GM12878 (cell line): ENCODE measurements at regions of chr3 and their contacts with region 1.

Region 1: DNA sequence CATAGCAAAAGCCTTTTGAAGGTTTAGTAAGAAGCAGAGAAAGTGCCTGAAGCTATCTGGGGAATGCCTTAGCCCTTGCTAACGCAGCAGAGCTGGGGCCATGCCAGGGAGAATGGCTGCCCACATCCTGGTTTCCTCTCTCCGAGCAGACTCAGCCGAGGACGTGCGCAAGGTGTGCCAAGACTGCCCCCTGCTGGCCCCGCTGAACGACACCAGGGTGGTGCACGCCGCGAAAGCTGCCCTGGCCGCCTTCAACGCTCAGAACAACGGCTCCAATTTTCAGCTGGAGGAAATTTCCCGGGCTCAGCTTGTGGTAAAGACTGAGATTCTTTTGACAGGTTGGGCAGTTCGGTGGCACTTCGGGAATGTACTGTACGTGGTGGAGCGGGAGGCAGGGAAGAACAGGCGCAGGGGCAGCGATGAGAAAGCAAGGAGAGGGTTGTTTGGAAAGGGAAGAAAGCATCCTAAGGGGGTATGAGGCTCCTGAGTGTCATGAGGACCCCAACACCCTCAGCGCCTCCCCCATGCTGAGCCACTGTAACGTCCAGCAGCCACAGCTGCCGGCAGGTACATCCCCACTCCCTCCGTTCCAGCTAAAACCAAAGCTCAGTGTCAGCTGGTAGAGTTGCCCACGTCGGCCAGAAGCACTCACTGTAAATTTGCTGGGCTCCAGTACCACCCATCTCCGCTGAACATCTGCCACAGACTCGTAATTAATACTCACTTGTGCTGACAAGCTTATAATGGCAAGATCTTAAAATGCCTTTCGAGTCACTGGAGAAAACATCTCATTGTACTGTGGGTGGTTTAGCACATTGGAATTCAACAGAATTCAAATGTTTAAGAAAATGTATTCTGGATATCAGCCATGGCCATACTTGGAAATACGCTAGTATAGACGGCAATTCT is 4.4 kb downstream of the AHSG start:
- DNase-seq: peak; percentile 59
- ATAC-seq: peak; percentile 98
- H3K4me3 ChIP-seq: no peak overlapping the region; the same call in 1 of the 2 replicates
- H3K27ac ChIP-seq: no peak overlapping the region
- H3K4me1 ChIP-seq: peaks cover 7% of the 10 kb centered on the region
- H3K27me3 ChIP-seq: peaks cover 2 to 3% of the 10 kb centered on the region in 2 experiments; a peak in 3 of 4 replicates
- CTCF ChIP-seq: peak; percentile 94 to 97 (median 96)
- EP300 ChIP-seq: no peak
- POLR2A ChIP-seq: no peak
- RAD21 ChIP-seq: peak; percentile 77

Region 2: DNA sequence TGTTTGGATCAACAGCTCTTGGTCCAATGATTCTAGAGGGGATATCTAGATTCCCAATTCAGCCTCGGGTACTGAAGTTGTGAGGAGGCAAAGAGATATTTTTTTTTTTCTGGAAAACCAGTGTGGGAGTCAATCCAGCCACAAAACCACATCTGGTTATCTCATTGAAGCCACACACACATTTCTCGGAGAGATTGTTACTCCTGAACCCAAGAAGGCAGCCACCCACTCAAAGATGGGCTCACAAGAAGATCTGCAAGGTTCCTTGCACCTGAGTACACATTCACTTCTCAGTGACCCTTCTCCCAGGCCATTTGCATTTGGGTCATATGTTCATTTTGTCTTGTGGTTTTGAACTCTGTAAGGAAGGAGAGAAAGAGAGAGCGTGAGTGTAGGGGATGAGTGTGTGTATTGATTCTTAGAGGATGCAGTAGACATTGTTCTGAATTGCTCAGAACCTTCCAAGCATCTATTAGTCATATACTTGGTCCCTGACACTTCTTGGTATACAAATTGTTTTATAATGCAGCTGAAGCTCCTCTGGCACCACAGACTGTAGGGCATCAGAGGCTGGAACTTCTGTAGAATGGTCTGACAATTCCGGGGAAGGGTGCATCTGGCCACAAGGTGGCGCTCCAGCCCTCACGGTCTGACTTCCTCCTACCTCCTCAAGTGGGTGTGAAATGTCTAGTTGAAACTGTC is 640.2 kb before region 1 on chr3:
- CTCF ChIA-PET with region 1: interaction called, 80 read pairs
- POLR2A ChIA-PET with region 1: no interaction called
- RAD21 ChIA-PET with region 1: interaction called, 11 read pairs
- SMC1A ChIA-PET with region 1: interaction called, 9 read pairs
- in situ Hi-C with region 1: no loop called
- intact Hi-C with region 1: loop called (anchors 2 kb)
- DNase-seq: peak; percentile 42
- ATAC-seq: peak; percentile 100
- H3K4me3 ChIP-seq: no peak overlapping the region
- H3K27ac ChIP-seq: no peak overlapping the region
- H3K4me1 ChIP-seq: peaks cover 4% of the 10 kb centered on the region; the same call in 1 of the 2 replicates
- H3K27me3 ChIP-seq: no peaks in the 10 kb centered on the region
- CTCF ChIP-seq: peak; percentile 85 to 93 (median 90)
- EP300 ChIP-seq: no peak
- POLR2A ChIP-seq: no peak
- RAD21 ChIP-seq: peak; percentile 76

Region 3: DNA sequence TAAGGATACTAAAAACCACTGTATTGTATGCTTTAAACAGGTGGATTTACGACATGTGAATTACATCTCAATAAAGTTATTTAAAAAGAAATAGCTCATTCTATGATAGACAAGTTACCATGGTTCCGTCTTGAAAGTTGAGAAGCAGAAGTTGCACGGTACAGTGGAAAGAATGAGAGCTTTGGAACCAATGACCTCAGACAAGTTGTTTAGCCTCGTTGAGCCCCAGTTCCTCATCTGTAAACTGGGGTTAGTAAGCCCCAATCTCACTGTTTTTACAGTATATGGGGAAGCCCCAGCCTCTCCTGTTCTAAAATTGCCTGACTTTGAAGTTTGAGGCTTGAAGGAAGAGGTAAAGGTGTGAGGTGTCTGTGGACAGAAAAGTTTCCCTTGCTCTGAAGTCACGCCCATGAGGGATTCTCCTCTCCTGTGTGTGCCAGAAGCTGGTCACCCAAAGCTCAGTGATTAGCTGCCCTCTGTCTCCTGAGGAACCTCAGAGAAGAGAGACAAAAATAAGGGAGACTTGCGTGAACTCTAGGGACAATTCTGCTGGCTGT is 83.1 kb before region 1 on chr3:
- CTCF ChIA-PET with region 1: interaction called, 73 read pairs
- POLR2A ChIA-PET with region 1: no interaction called
- RAD21 ChIA-PET with region 1: interaction called, 41 read pairs
- SMC1A ChIA-PET with region 1: interaction called, 38 read pairs
- in situ Hi-C with region 1: no loop called
- intact Hi-C with region 1: no loop called
- DNase-seq: peak; percentile 95
- ATAC-seq: peak; percentile 87
- H3K4me3 ChIP-seq: peak overlapping the region; percentile 13; the same call in 1 of the 2 replicates
- H3K27ac ChIP-seq: peak overlapping the region; percentile 86
- H3K4me1 ChIP-seq: peaks cover 78% of the 10 kb centered on the region
- H3K27me3 ChIP-seq: no peaks in the 10 kb centered on the region
- CTCF ChIP-seq: no peak
- EP300 ChIP-seq: peak; percentile 88 to 89
- POLR2A ChIP-seq: no peak
- RAD21 ChIP-seq: 0 out of 2 replicates have a peak, but pooled peaks have one; percentile 12

Region 4: DNA sequence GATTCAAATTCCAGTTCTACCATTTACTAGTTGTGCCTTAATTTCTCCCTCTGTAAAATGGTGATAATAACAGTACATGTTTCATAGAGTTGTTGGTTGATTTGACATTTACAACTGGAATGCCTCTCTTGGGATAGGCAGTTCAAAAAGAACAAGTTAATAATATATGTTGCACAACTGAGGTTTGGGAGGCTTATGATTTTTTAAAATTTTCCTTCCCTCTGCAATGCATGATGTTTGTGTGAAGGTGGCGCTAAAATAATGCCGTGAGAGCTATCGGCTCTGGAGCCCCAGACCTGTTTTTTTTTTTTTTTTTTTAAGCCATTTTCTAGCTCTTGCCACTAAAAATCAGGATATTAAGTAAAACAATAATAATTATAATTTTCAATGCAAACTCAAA is 28.2 kb before region 1 on chr3:
- CTCF ChIA-PET with region 1: interaction called, 12 read pairs
- POLR2A ChIA-PET with region 1: no interaction called
- RAD21 ChIA-PET with region 1: no interaction called
- SMC1A ChIA-PET with region 1: interaction called, 6 read pairs
- in situ Hi-C with region 1: no loop called
- intact Hi-C with region 1: no loop called
- DNase-seq: no peak
- ATAC-seq: no peak
- H3K4me3 ChIP-seq: no peak overlapping the region
- H3K27ac ChIP-seq: no peak overlapping the region
- H3K4me1 ChIP-seq: no peaks in the 10 kb centered on the region
- H3K27me3 ChIP-seq: peaks cover 0 to 2% of the 10 kb centered on the region in 2 experiments; a peak in 1 of 4 replicates
- CTCF ChIP-seq: peak in 2 of 3 experiments; percentile 10 to 16; a peak in 2 of 6 replicates
- EP300 ChIP-seq: no peak
- POLR2A ChIP-seq: no peak
- RAD21 ChIP-seq: peak; percentile 29

Region 5: GRCh38 chr3:186653080-186653707 is 35.9 kb after region 1 on chr3:
- CTCF ChIA-PET with region 1: interaction called, 21 read pairs
- POLR2A ChIA-PET with region 1: no interaction called
- RAD21 ChIA-PET with region 1: no interaction called
- SMC1A ChIA-PET with region 1: interaction called, 3 read pairs
- in situ Hi-C with region 1: no loop called
- intact Hi-C with region 1: no loop called
- DNase-seq: peak; percentile 61
- ATAC-seq: peak; percentile 98
- H3K4me3 ChIP-seq: no peak overlapping the region; the same call in 1 of the 2 replicates
- H3K27ac ChIP-seq: peak overlapping the region; percentile 32
- H3K4me1 ChIP-seq: peaks cover 17% of the 10 kb centered on the region
- H3K27me3 ChIP-seq: no peaks in the 10 kb centered on the region
- CTCF ChIP-seq: no peak
- EP300 ChIP-seq: no peak
- POLR2A ChIP-seq: no peak
- RAD21 ChIP-seq: no peak

Region 6: GRCh38 chr3:186669378-186670084 is 52.2 kb after region 1 on chr3:
- CTCF ChIA-PET with region 1: no interaction called
- POLR2A ChIA-PET with region 1: no interaction called
- RAD21 ChIA-PET with region 1: no interaction called
- SMC1A ChIA-PET with region 1: no interaction called
- in situ Hi-C with region 1: no loop called
- intact Hi-C with region 1: no loop called
- DNase-seq: no peak
- ATAC-seq: no peak
- H3K4me3 ChIP-seq: no peak overlapping the region
- H3K27ac ChIP-seq: no peak overlapping the region
- H3K4me1 ChIP-seq: no peaks in the 10 kb centered on the region
- H3K27me3 ChIP-seq: no peaks in the 10 kb centered on the region; a peak in 1 of 4 replicates
- CTCF ChIP-seq: no peak
- EP300 ChIP-seq: no peak
- POLR2A ChIP-seq: no peak
- RAD21 ChIP-seq: no peak

Region 7: GRCh38 chr3:186717039-186717457 is 99.8 kb after region 1 on chr3 and contains the start of gene KNG1:
- CTCF ChIA-PET with region 1: no interaction called
- POLR2A ChIA-PET with region 1: no interaction called
- RAD21 ChIA-PET with region 1: no interaction called
- SMC1A ChIA-PET with region 1: no interaction called
- in situ Hi-C with region 1: no loop called
- intact Hi-C with region 1: no loop called
- DNase-seq: no peak
- ATAC-seq: no peak
- H3K4me3 ChIP-seq: no peak within 1 kb of the TSS
- H3K27ac ChIP-seq: no peak within 1 kb of the TSS
- H3K4me1 ChIP-seq: no peaks in the 10 kb centered on the region
- H3K27me3 ChIP-seq: peaks cover 0 to 4% of the 10 kb centered on the region in 2 experiments; a peak in 2 of 4 replicates
- CTCF ChIP-seq: no peak
- EP300 ChIP-seq: no peak
- POLR2A ChIP-seq: no peak
- RAD21 ChIP-seq: no peak
- polyA plus RNA-seq, gene KNG1: not detected

Region 8: GRCh38 chr3:187164885-187165543 is 547.7 kb after region 1 on chr3:
- CTCF ChIA-PET with region 1: interaction called, 7 read pairs
- POLR2A ChIA-PET with region 1: no interaction called
- RAD21 ChIA-PET with region 1: interaction called, 7 read pairs
- SMC1A ChIA-PET with region 1: interaction called, 5 read pairs
- in situ Hi-C with region 1: no loop called
- intact Hi-C with region 1: loop called (anchors 10 kb)
- DNase-seq: no peak
- ATAC-seq: peak; percentile 76
- H3K4me3 ChIP-seq: no peak overlapping the region
- H3K27ac ChIP-seq: no peak overlapping the region
- H3K4me1 ChIP-seq: no peaks in the 10 kb centered on the region
- H3K27me3 ChIP-seq: no peaks in the 10 kb centered on the region; a peak in 1 of 4 replicates
- CTCF ChIP-seq: peak; percentile 52 to 60 (median 57); a peak in 5 of 6 replicates
- EP300 ChIP-seq: no peak
- POLR2A ChIP-seq: no peak
- RAD21 ChIP-seq: peak; percentile 74